Prostate gland (tissue), 2 donors: ENCODE measurements at regions of chr18 and their contacts with region 1.

Region 1: GRCh38 chr18:33577685-33578517 is at the start of gene ASXL3:
- DNase-seq: peak; percentile 17
- H3K4me3 ChIP-seq: peak within 1 kb of the TSS; percentile 57 to 63
- H3K27ac ChIP-seq: peak within 1 kb of the TSS; percentile 86 to 88
- H3K4me1 ChIP-seq: no peaks in the 10 kb centered on the region
- H3K27me3 ChIP-seq: no peaks in the 10 kb centered on the region
- CTCF ChIP-seq: no peak
- POLR2A ChIP-seq: no peak
- total RNA-seq, gene ASXL3: 5.1 to 7.3 TPM

Region 2: GRCh38 chr18:33424266-33424946 is 153.5 kb before region 1 on chr18:
- intact Hi-C with region 1: loop called (anchors 10 kb)
- DNase-seq: no peak
- H3K4me3 ChIP-seq: no peak overlapping the region
- H3K27ac ChIP-seq: no peak overlapping the region
- H3K4me1 ChIP-seq: no peaks in the 10 kb centered on the region
- H3K27me3 ChIP-seq: no peaks in the 10 kb centered on the region
- CTCF ChIP-seq: no peak
- POLR2A ChIP-seq: no peak

Region 3: GRCh38 chr18:33711514-33711913 is 133.6 kb after region 1 on chr18:
- intact Hi-C with region 1: no loop called
- DNase-seq: no peak
- H3K4me3 ChIP-seq: no peak overlapping the region
- H3K27ac ChIP-seq: no peak overlapping the region
- H3K4me1 ChIP-seq: no peaks in the 10 kb centered on the region
- H3K27me3 ChIP-seq: no peaks in the 10 kb centered on the region
- CTCF ChIP-seq: no peak
- POLR2A ChIP-seq: no peak

Region 4: DNA sequence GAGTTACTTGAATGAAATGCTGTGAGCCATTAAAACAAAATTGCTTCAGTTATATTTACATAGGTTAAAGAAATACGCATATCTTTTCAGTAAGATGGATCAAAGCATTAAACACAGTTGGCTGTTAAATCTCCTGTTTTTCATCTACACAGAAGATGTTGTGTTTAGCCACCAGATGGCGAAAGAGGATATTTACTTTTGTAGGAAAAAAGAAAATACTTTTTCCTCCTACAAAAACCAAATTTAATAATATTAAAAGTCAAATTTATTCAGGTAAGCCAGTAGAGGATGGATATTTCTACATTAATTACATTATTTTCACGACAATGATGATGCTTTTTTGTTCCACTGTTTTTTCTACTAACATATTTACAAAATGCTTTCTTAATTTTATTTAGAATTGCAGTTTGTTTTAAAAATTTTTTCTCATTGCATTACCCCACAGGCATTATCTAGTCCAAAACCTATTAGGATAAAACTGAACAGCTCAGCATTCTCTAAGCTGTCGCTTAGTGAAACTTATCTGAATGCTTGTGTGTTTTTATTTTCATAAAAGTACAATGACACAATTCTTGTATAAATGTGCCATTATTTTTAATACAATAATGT is 173.8 kb after region 1 on chr18:
- intact Hi-C with region 1: loop called (anchors 5 kb)
- DNase-seq: no peak
- H3K4me3 ChIP-seq: no peak overlapping the region
- H3K27ac ChIP-seq: no peak overlapping the region
- H3K4me1 ChIP-seq: no peaks in the 10 kb centered on the region
- H3K27me3 ChIP-seq: no peaks in the 10 kb centered on the region
- CTCF ChIP-seq: peak in 3 of 4 experiments; percentile 50 to 64 (median 60)
- POLR2A ChIP-seq: no peak

Region 5: GRCh38 chr18:34222307-34223163 is 644.6 kb after region 1 on chr18:
- intact Hi-C with region 1: loop called (anchors 2 kb)
- DNase-seq: no peak
- H3K4me3 ChIP-seq: peak overlapping the region; percentile 16 to 25
- H3K27ac ChIP-seq: no peak overlapping the region
- H3K4me1 ChIP-seq: no peaks in the 10 kb centered on the region
- H3K27me3 ChIP-seq: peaks cover 7% of the 10 kb centered on the region
- CTCF ChIP-seq: no peak
- POLR2A ChIP-seq: no peak